ENCODE measurements at regions of chr11 and their contacts with region 1.

Region 1: DNA sequence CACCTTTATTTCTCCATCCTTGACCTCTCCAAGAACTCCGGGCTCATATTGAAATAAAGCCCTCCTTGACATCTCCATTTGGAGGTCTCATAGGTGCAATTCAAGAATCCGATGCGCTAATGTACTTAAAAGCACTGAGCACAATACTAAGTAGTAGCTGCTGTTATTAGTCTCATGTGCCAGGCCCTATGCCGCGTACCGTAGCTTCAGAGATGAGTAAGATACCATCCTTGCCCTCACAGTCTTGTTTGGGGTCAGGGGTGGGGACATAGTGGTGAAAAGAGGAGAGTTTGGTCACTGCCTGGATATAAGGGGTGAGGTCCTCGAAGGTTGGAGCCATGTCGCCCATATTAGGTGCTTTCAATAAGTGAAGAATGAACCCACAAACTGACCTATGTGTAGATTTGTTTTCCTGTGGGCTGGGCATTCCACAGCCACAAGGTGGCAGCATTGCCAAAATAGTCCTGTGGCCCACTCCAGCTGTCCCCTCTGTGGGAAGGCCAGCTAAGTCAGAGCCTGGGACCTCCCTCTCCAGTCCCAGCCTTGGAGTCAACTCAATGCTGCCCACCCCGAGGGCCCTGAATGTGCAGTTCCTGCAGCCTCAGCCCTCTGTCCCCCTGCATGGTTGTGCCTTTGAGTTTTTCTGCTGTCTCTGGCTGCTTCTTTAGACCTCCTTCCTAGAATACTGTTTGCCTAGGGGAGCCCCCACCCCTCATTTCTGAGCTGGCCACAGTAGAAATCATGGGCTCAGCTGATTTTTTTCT is 6.5 kb downstream of the DCPS start:
- DNase-seq: peak; percentile 80 to 92 (median 88)
- ATAC-seq: peak; percentile 94 to 95
- H3K4me3 ChIP-seq: no peak overlapping the region
- H3K27ac ChIP-seq: no peak overlapping the region
- H3K4me1 ChIP-seq: peaks cover 4% of the 10 kb centered on the region
- H3K27me3 ChIP-seq: no peaks in the 10 kb centered on the region

Region 2: GRCh38 chr11:126416542-126417090 is 106.2 kb after region 1 on chr11:
- intact Hi-C with region 1: loop called in 3 of 4 experiments (anchors 5 to 10 kb)
- DNase-seq: peak; percentile 94 to 98 (median 97)
- ATAC-seq: peak; percentile 80 to 84
- H3K4me3 ChIP-seq: peak overlapping the region; percentile 8
- H3K27ac ChIP-seq: peak overlapping the region; percentile 93
- H3K4me1 ChIP-seq: peaks cover 26% of the 10 kb centered on the region
- H3K27me3 ChIP-seq: no peaks in the 10 kb centered on the region

Region 3: GRCh38 chr11:126434950-126435335 is 124.5 kb after region 1 on chr11:
- intact Hi-C with region 1: loop called in 1 of 4 experiments (anchors 5 kb)
- DNase-seq: peak in 1 of 3 donors; percentile 45
- ATAC-seq: no peak
- H3K4me3 ChIP-seq: no peak overlapping the region
- H3K27ac ChIP-seq: no peak overlapping the region
- H3K4me1 ChIP-seq: peaks cover 15% of the 10 kb centered on the region
- H3K27me3 ChIP-seq: no peaks in the 10 kb centered on the region

Region 4: DNA sequence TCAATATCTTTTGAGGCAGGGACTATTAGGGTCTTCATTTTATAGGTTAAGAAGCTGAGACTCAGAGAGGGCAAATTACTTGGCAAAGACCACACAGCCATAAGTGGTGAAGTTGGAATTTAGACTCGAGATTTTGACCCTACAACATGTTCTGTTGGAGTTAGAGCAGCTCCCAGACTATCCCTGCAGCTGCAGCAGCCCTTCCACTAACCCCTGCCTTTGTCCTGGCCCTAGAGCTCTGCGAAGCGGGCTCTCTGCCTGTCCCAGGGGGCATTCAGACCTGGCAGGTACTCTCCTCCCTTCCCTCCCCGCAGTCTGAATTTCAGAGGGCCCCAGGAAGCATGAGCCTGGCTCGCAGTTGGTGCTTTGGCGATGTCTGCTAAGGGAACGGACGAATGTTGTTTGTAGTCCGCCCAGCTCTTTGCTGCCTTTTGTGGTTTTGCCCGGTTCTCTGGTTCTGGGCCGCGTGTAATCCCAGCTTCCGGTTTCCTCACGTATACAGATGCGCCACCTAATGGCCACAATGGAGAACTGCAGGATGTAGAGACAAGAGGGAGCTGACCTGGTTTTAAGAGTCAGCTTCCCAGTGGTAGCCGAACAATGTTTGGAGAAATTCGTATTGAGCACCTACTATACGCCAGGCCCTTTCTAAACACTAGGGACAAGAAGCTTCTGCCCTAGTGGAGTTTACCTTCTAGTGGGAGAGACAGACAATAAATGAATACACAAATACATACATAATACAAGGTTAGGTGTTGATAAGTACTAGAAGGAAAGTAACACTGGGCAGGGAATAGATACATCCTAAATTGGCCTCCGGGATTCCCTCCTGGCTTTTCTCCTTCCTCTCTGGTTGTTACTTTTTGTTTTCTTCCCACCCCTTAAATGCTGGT is 170.2 kb after region 1 on chr11:
- intact Hi-C with region 1: loop called in 3 of 4 experiments (anchors 2 to 5 kb)
- DNase-seq: peak; percentile 83 to 92 (median 89)
- ATAC-seq: peak; percentile 85 to 89
- H3K4me3 ChIP-seq: no peak overlapping the region
- H3K27ac ChIP-seq: peak overlapping the region; percentile 89
- H3K4me1 ChIP-seq: peaks cover 2% of the 10 kb centered on the region
- H3K27me3 ChIP-seq: no peaks in the 10 kb centered on the region